CD8-positive, alpha-beta T cell (primary cell): ENCODE measurements at regions of chr2 and their contacts with region 1.

Region 1: GRCh38 chr2:235766278-235766677 is 272.4 kb downstream of the AGAP1 start:
- DNase-seq: peak in 7 of 9 experiments; percentile 23 to 64 (median 58)
- ATAC-seq: peak; percentile 48
- H3K4me3 ChIP-seq: no peak overlapping the region
- H3K4me3 Mint-ChIP-seq: no peak overlapping the region
- H3K27ac ChIP-seq: no peak overlapping the region
- H3K27ac Mint-ChIP-seq: no peak overlapping the region
- H3K4me1 ChIP-seq: no peaks in the 10 kb centered on the region
- H3K4me1 Mint-ChIP-seq: no peaks in the 10 kb centered on the region
- H3K27me3 ChIP-seq: no peaks in the 10 kb centered on the region
- H3K27me3 Mint-ChIP-seq: no peaks in the 10 kb centered on the region
- CTCF ChIP-seq: peak; percentile 96

Region 2: GRCh38 chr2:235414422-235414821 is 351.9 kb before region 1 on chr2:
- CTCF ChIA-PET with region 1: no interaction called
- POLR2A ChIA-PET with region 1: no interaction called
- intact Hi-C with region 1: no loop called
- DNase-seq: no peak
- ATAC-seq: no peak
- H3K4me3 ChIP-seq: no peak overlapping the region
- H3K4me3 Mint-ChIP-seq: no peak overlapping the region
- H3K27ac ChIP-seq: no peak overlapping the region
- H3K27ac Mint-ChIP-seq: no peak overlapping the region
- H3K4me1 ChIP-seq: no peaks in the 10 kb centered on the region
- H3K4me1 Mint-ChIP-seq: no peaks in the 10 kb centered on the region
- H3K27me3 ChIP-seq: no peaks in the 10 kb centered on the region
- H3K27me3 Mint-ChIP-seq: peaks cover 12% of the 10 kb centered on the region
- CTCF ChIP-seq: no peak

Region 3: DNA sequence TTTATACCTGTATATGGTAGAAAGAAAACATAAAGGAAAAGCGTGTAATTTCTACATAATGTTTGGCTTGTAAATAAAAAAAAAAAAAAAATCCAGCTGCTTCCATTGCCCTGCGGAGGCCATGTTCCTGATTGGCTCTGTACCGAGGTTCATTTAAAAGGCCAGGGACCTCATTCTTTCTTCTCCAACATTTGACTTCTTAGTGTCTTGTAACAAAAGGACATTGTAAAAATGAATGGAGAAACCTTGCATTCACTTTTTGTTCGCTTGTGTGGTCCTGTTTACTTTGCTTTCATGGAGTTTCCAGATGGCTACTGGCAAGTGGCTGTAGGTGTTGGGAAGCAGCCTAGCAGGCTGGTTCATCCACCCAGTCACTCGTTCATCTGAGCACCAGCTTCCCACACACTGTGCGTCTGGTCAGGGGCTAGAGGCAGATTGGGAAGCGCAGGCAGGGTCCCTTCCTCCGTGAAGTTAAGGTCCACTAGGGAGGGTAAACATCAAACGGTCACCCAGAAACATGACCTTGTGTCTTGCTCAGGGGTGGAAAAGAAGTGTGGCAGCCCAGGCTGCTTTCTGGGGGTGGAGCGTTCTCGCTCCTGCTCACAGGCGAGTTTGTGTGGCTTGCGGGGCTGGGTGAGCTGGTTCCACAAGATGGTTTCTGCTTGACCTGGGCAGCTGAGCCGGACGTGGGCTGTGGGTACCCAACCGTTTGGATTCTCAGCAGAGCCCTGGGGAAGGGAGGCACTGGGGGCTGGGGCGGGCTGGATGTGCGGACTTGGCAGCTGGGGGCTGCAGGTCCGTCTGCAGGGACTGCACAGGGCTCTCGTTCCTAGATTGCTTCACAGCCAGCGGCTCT is 11.7 kb before region 1 on chr2:
- CTCF ChIA-PET with region 1: interaction called, 22 read pairs
- POLR2A ChIA-PET with region 1: no interaction called
- intact Hi-C with region 1: no loop called
- DNase-seq: no peak
- ATAC-seq: no peak
- H3K4me3 ChIP-seq: no peak overlapping the region
- H3K4me3 Mint-ChIP-seq: no peak overlapping the region
- H3K27ac ChIP-seq: no peak overlapping the region
- H3K27ac Mint-ChIP-seq: no peak overlapping the region
- H3K4me1 ChIP-seq: no peaks in the 10 kb centered on the region
- H3K4me1 Mint-ChIP-seq: no peaks in the 10 kb centered on the region
- H3K27me3 ChIP-seq: no peaks in the 10 kb centered on the region
- H3K27me3 Mint-ChIP-seq: peaks cover 12% of the 10 kb centered on the region
- CTCF ChIP-seq: no peak

Region 4: GRCh38 chr2:236180831-236181453 is 414.7 kb after region 1 on chr2:
- CTCF ChIA-PET with region 1: interaction called, 5 read pairs
- POLR2A ChIA-PET with region 1: no interaction called
- intact Hi-C with region 1: loop called in 1 of 2 experiments (anchors 5 kb)
- DNase-seq: peak in 4 of 9 experiments; percentile 20 to 48 (median 32)
- ATAC-seq: no peak
- H3K4me3 ChIP-seq: no peak overlapping the region
- H3K4me3 Mint-ChIP-seq: no peak overlapping the region
- H3K27ac ChIP-seq: no peak overlapping the region
- H3K27ac Mint-ChIP-seq: no peak overlapping the region
- H3K4me1 ChIP-seq: peaks cover 8% of the 10 kb centered on the region
- H3K4me1 Mint-ChIP-seq: peaks cover 14% of the 10 kb centered on the region
- H3K27me3 ChIP-seq: peaks cover 18 to 31% of the 10 kb centered on the region in 2 experiments
- H3K27me3 Mint-ChIP-seq: peaks cover 63% of the 10 kb centered on the region
- CTCF ChIP-seq: peak; percentile 38

Region 5: DNA sequence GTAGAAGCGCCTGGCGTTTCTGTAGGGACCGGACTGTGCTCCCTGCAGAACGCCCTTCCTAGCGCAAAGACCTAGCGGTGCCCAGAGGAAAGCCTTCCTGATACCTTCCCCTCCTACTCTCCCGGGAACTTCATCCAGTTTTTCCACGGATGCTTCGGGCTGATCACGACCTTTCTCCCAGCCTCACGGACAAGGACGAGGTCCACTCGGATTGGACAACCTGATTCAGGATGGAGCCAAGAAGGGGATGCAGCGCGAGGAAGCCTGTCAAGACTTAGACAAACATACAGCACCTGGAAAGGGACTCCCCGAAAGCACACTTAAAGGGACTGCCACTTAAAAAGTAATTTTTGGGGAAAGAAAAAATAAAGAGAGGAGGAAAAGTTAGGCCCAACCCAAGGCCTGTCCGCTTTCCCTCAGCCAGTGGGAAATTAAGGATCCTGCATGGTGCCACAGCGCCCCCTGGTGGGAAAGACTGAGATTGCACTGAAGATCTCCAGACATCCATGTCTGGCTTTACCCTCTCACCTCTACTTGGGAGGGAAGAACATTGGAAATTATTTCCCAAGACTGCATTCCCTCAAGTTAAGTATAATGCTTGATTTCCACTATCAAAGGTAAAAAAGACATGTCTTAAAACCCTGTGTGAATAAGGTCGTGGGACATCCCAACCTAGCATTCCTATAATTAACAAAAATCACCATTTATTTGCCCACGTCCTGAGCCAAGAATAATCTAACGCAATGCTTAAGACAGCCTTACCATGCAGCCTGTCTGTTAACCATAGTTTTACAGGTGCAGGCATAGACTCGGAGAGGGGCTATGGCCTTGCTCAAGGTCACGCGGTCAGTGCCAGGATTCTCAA is 1306.0 kb after region 1 on chr2:
- CTCF ChIA-PET with region 1: no interaction called
- POLR2A ChIA-PET with region 1: no interaction called
- intact Hi-C with region 1: loop called (anchors 2 kb)
- DNase-seq: peak; percentile 47 to 83 (median 69)
- ATAC-seq: peak; percentile 48
- H3K4me3 ChIP-seq: no peak overlapping the region
- H3K4me3 Mint-ChIP-seq: no peak overlapping the region
- H3K27ac ChIP-seq: no peak overlapping the region
- H3K27ac Mint-ChIP-seq: no peak overlapping the region
- H3K4me1 ChIP-seq: no peaks in the 10 kb centered on the region
- H3K4me1 Mint-ChIP-seq: no peaks in the 10 kb centered on the region
- H3K27me3 ChIP-seq: no peaks in the 10 kb centered on the region
- H3K27me3 Mint-ChIP-seq: no peaks in the 10 kb centered on the region
- CTCF ChIP-seq: peak; percentile 98